ENCODE measurements at regions of chr6 and their contacts with region 1.

Region 1: DNA sequence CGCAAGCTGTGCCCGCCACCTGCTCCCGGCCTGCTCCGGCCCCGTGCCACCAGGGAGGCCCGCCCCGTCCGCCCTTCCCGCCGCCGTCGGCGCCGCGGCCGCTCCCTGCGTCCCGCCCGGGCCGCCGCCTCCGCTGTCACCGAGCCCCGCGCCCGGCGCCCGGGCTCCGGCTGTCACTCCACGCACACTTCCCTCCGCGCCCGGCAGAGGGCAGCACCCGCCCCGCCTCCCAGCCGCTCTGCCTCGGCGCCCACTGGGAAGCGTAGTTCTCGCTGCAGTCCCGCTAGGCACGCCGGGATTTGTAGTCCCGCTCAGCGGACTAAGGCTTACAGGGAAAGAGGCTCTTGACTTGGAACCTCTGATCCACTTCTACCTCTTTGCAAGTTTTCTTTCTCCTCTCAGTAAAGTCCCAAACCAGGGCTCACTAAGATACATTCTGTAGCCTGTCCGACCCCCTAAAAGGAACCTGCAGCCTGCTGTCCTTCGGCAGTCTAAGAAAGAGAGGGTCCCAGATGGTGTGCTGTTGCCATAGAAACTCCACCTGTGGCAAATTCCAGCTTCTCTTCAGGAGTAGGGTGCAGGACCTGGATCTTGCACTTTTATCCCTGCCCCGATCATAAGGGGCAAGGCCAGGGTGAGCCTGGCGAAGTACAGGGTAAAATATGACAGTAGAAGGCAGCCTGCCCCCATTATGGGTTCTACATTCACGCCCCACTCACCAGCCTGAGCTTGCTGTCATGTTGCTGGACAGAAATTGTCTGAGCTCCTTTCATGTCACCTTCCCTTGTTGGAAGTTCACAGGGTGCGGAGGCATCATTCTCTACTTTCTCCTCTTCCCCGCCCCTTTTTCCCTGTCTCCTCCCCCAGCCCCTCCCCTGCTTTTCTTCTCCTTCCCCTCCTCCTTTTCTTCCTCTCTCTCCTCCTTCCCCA is at the start of gene TFEB:
- DNase-seq: peak; percentile 36
- H3K4me3 ChIP-seq: peak within 1 kb of the TSS; percentile 85
- H3K27me3 ChIP-seq: no peaks in the 10 kb centered on the region; the same call in 1 of the 2 replicates
- CTCF ChIP-seq: peak; percentile 84
- polyA plus RNA-seq, gene TFEB: 13.2 and 21.9 TPM in 2 replicates

Region 2: GRCh38 chr6:41713161-41713649 is 22.5 kb before region 1 on chr6:
- CTCF ChIA-PET with region 1: interaction called, 11 read pairs
- POLR2A ChIA-PET with region 1: no interaction called
- DNase-seq: no peak
- H3K4me3 ChIP-seq: no peak overlapping the region
- H3K27me3 ChIP-seq: no peaks in the 10 kb centered on the region
- CTCF ChIP-seq: no peak

Region 3: GRCh38 chr6:41720262-41720620 is 15.5 kb before region 1 on chr6:
- CTCF ChIA-PET with region 1: interaction called, 11 read pairs
- POLR2A ChIA-PET with region 1: interaction called, 3 read pairs
- DNase-seq: no peak
- H3K4me3 ChIP-seq: no peak overlapping the region
- H3K27me3 ChIP-seq: no peaks in the 10 kb centered on the region
- CTCF ChIP-seq: no peak

Region 4: DNA sequence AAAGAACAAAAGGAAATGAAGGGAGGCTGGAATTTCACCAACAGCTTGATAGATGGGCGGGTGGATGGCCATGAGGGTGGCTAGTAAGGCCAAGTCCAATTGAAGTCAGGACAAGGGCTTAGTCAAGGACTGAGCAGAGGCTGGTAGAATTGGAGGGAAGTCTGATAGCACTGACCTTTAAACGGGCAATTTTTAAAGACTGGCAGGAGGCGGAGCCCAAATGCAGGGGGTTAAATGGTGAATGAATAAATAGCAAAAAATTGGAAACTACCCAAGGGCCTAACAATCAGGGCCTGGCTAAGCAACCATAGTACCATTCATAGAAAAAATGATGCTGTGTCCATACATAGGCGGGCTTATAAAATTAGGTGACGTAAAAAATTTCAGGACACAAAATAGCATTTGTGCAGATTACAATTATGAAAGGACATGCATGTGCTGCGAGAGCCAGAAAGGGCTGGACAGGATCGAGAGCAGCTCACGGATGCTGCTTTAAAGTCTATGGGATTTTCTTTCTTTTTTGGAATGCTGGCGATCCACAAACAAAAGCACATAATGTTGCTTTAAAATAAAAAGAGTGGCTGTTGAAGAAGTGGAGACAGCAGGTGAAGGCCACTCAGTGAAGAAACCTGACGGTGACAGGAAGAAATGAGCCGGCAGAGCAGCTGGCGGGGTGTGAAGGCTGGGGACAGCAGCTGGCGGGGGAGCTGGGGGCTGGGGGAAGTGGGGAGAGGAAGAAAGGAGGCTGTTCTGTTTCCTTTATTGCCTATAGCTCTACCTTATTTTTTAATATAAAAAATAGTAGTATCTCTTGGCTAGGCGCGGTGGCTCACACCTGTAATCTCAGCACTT is 271.8 kb after region 1 on chr6:
- CTCF ChIA-PET with region 1: no interaction called
- POLR2A ChIA-PET with region 1: no interaction called
- DNase-seq: no peak
- H3K4me3 ChIP-seq: no peak overlapping the region
- H3K27me3 ChIP-seq: no peaks in the 10 kb centered on the region
- CTCF ChIP-seq: no peak

Region 5: GRCh38 chr6:42028234-42029061 is 292.8 kb after region 1 on chr6:
- CTCF ChIA-PET with region 1: no interaction called
- POLR2A ChIA-PET with region 1: no interaction called
- DNase-seq: no peak
- H3K4me3 ChIP-seq: no peak overlapping the region
- H3K27me3 ChIP-seq: no peaks in the 10 kb centered on the region
- CTCF ChIP-seq: no peak